ENCODE measurements at regions of chr16 and their contacts with region 1.

Region 1: GRCh38 chr16:30028438-30029076 is 2.5 kb downstream of the TLCD3B start:
- DNase-seq: no peak
- CTCF ChIP-seq: no peak

Region 2: GRCh38 chr16:29680180-29680598 is 348.4 kb before region 1 on chr16:
- in situ Hi-C with region 1: loop called (anchors 10 kb)
- DNase-seq: peak; percentile 12
- CTCF ChIP-seq: no peak